ENCODE measurements at regions of chr4 and their contacts with region 1.

Region 1: DNA sequence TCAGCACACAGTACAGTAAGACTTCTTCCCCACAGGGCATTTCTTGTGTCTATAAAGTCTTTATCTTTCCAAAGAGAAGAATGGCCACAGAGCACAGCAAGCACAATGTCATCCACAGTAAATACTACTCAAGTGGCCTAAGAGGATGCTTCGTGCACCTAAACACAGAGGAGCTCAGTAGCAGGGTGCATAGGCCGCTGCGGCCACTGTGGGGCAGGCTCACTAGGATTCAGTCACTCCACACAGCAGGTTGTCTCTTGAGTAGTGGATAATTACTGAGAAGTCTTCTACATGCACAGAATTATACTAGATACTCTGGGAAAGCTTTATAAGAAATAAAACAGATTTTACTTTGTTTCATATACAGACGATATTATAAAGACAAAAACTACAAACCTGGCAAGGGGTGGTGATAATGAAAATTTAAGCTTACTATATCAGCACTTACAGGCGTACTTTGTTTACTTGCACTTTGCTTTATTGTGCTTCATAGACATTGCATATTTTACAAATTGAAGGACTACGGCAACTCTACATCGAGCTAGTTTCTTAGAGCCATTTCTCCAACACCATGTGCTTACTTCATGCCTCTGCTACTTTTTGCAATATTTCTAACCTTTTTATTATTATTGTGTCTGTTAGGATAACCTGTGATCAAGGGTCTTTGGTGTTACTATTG is 78.5 kb downstream of the PRDM5 start:
- DNase-seq: no peak
- H3K4me3 Mint-ChIP-seq: no peak overlapping the region
- H3K27ac Mint-ChIP-seq: no peak overlapping the region
- H3K4me1 Mint-ChIP-seq: peaks cover 26% of the 10 kb centered on the region
- H3K27me3 Mint-ChIP-seq: peaks cover 3% of the 10 kb centered on the region

Region 2: GRCh38 chr4:120819805-120820437 is 24.1 kb before region 1 on chr4:
- intact Hi-C with region 1: loop called (anchors 2 kb)
- DNase-seq: no peak
- H3K4me3 Mint-ChIP-seq: no peak overlapping the region
- H3K27ac Mint-ChIP-seq: no peak overlapping the region
- H3K4me1 Mint-ChIP-seq: peaks cover 4% of the 10 kb centered on the region
- H3K27me3 Mint-ChIP-seq: peaks cover 12% of the 10 kb centered on the region

Region 3: GRCh38 chr4:120902925-120903324 is 58.9 kb after region 1 on chr4:
- intact Hi-C with region 1: loop called (anchors 10 kb)
- DNase-seq: no peak
- H3K4me3 Mint-ChIP-seq: no peak overlapping the region
- H3K27ac Mint-ChIP-seq: no peak overlapping the region
- H3K4me1 Mint-ChIP-seq: no peaks in the 10 kb centered on the region
- H3K27me3 Mint-ChIP-seq: peaks cover 14% of the 10 kb centered on the region

Measured in activated T-helper 2 cell treated with anti-CD3 and anti-CD28 coated beads, Interferon-gamma antibody, Interleukin-2, Interleukin-4, amounts not matched to agents 10 μg/mL and 5 μg/mL and 100 μg/mL, durations not matched to agents 14 hours and 24 hours and 36 hours (primary cell).